ENCODE measurements at regions of chr11 and their contacts with region 1.

Region 1: DNA sequence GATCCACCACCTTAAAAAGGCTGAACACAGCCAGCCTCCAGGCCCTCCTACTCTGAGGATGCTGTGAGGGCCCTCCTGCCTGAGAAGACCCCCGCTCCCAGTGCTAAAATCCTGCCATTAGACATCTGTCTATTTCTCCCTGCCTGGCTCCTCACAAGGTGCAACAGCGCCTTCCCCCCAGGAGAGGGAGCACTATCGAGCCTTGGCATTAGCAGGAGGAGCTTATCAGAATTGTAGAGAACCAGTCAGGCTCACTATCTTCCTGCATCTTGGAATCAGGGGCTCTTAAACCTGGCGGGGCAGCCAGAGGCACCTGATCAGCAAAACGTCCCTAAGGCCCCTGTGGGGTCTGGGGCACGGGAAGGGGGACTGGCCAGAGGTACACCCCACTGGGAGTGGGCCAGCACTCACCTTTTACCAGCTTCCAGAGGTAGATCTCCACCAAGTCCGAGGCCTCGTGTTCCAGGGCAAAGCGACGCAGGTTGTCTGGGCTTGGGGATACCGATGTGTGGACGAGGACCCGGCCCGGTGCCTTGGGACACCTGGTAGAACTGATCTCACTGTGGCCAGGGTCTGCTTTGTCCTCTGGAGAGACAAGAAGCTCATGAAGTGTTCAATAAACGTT is 28.7 kb downstream of the CHRDL2 start:
- DNase-seq: peak; percentile 79 to 85 (median 84)
- ATAC-seq: peak; percentile 88
- H3K4me3 ChIP-seq: no peak overlapping the region
- H3K27ac ChIP-seq: no peak overlapping the region
- H3K4me1 ChIP-seq: peaks cover 6 to 12% of the 10 kb centered on the region in 2 experiments; a peak in 3 of 5 replicates
- H3K27me3 ChIP-seq: no peaks in the 10 kb centered on the region
- CTCF ChIP-seq: peak; percentile 91 to 95 (median 92)
- EP300 ChIP-seq: no peak
- POLR2A ChIP-seq: no peak
- RAD21 ChIP-seq: peak; percentile 57 to 77

Region 2: GRCh38 chr11:74620531-74620930 is 82.0 kb before region 1 on chr11:
- CTCF ChIA-PET with region 1: no interaction called
- POLR2A ChIA-PET with region 1: no interaction called
- in situ Hi-C with region 1: no loop called
- intact Hi-C with region 1: no loop called
- DNase-seq: no peak
- ATAC-seq: no peak
- H3K4me3 ChIP-seq: no peak overlapping the region
- H3K27ac ChIP-seq: no peak overlapping the region
- H3K4me1 ChIP-seq: no peaks in the 10 kb centered on the region; a peak in 1 of 5 replicates
- H3K27me3 ChIP-seq: no peaks in the 10 kb centered on the region
- CTCF ChIP-seq: no peak
- EP300 ChIP-seq: no peak
- POLR2A ChIP-seq: no peak
- RAD21 ChIP-seq: no peak

Region 3: GRCh38 chr11:74726547-74727182 is 24.2 kb after region 1 on chr11:
- CTCF ChIA-PET with region 1: interaction called, 8 read pairs
- POLR2A ChIA-PET with region 1: no interaction called
- in situ Hi-C with region 1: no loop called
- intact Hi-C with region 1: loop called (anchors 1 kb)
- DNase-seq: peak; percentile 79 to 83 (median 80)
- ATAC-seq: peak; percentile 99
- H3K4me3 ChIP-seq: no peak overlapping the region
- H3K27ac ChIP-seq: no peak overlapping the region
- H3K4me1 ChIP-seq: peaks cover 0 to 10% of the 10 kb centered on the region in 2 experiments; a peak in 1 of 5 replicates
- H3K27me3 ChIP-seq: peaks cover 52 to 59% of the 10 kb centered on the region in 2 experiments
- CTCF ChIP-seq: peak; percentile 90 to 94 (median 91)
- EP300 ChIP-seq: no peak
- POLR2A ChIP-seq: no peak
- RAD21 ChIP-seq: peak; percentile 77 to 90

Region 4: DNA sequence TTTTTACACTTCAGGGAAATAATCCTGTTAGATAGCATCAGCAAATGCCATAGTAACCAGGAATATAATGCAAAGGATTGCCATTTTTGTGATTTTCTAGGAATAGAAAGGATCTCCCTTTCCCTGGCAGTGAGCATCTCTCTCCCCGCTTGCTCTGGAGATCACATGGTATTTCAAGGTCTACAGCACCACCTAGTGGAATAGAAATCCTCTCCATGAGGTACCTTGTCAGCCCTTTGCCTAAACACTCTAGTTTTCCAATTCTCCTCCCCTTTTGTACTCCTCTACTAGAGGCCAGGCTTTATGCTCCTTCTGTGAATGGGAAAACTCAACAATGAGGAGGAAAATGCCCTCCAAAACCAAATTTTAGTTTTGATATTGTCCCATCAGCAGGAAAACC is 168.0 kb after region 1 on chr11:
- CTCF ChIA-PET with region 1: no interaction called
- POLR2A ChIA-PET with region 1: no interaction called
- in situ Hi-C with region 1: no loop called
- intact Hi-C with region 1: loop called (anchors 2 kb)
- DNase-seq: peak; percentile 31 to 59 (median 46)
- ATAC-seq: peak; percentile 82
- H3K4me3 ChIP-seq: no peak overlapping the region
- H3K27ac ChIP-seq: no peak overlapping the region
- H3K4me1 ChIP-seq: no peaks in the 10 kb centered on the region
- H3K27me3 ChIP-seq: no peaks in the 10 kb centered on the region
- CTCF ChIP-seq: peak; percentile 39 to 54 (median 47); a peak in 4 of 6 replicates
- EP300 ChIP-seq: no peak
- POLR2A ChIP-seq: no peak
- RAD21 ChIP-seq: peak in 1 of 2 experiments; percentile 54; a peak in 2 of 4 replicates

Region 5: GRCh38 chr11:74966651-74967050 is 264.2 kb after region 1 on chr11:
- CTCF ChIA-PET with region 1: no interaction called
- POLR2A ChIA-PET with region 1: no interaction called
- in situ Hi-C with region 1: no loop called
- intact Hi-C with region 1: no loop called
- DNase-seq: no peak
- ATAC-seq: no peak
- H3K4me3 ChIP-seq: no peak overlapping the region
- H3K27ac ChIP-seq: no peak overlapping the region
- H3K4me1 ChIP-seq: peaks cover 3 to 21% of the 10 kb centered on the region in 2 experiments; a peak in 3 of 5 replicates
- H3K27me3 ChIP-seq: no peaks in the 10 kb centered on the region
- CTCF ChIP-seq: no peak
- EP300 ChIP-seq: no peak
- POLR2A ChIP-seq: no peak
- RAD21 ChIP-seq: no peak

Region 6: DNA sequence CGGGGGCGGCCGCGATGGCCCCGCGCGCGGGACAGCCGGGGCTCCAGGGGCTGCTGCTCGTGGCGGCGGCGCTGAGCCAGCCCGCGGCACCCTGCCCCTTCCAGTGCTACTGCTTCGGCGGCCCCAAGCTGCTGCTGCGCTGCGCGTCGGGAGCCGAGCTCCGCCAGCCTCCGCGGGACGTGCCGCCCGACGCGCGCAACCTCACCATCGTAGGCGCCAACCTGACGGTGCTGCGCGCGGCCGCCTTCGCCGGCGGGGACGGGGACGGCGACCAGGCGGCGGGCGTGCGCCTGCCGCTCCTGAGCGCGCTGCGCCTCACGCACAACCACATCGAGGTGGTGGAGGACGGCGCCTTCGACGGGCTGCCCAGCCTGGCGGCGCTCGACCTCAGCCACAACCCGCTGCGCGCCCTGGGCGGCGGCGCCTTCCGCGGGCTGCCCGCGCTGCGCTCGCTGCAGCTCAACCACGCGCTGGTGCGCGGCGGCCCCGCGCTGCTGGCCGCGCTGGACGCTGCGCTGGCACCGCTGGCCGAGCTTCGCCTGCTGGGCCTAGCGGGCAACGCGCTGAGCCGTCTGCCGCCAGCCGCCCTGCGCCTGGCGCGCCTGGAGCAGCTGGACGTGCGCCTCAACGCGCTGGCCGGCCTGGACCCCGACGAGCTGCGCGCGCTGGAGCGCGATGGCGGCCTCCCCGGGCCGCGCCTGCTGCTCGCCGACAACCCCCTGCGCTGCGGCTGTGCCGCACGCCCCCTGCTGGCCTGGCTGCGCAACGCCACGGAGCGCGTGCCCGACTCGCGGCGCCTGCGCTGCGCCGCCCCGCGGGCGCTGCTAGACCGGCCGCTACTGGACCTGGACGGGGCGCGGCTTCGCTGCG is 538.8 kb after region 1 on chr11:
- CTCF ChIA-PET with region 1: interaction called, 4 read pairs
- POLR2A ChIA-PET with region 1: no interaction called
- in situ Hi-C with region 1: no loop called
- intact Hi-C with region 1: loop called (anchors 10 kb)
- DNase-seq: peak; percentile 93 to 96 (median 95)
- ATAC-seq: peak; percentile 96
- H3K4me3 ChIP-seq: peak overlapping the region; percentile 51
- H3K27ac ChIP-seq: no peak overlapping the region
- H3K4me1 ChIP-seq: peaks cover 3 to 23% of the 10 kb centered on the region in 2 experiments; a peak in 4 of 5 replicates
- H3K27me3 ChIP-seq: peaks cover 24 to 56% of the 10 kb centered on the region in 2 experiments
- CTCF ChIP-seq: peak in 2 of 3 experiments; percentile 99; a peak in 5 of 6 replicates
- EP300 ChIP-seq: peak; percentile 12; the same call in 1 of the 2 replicates
- POLR2A ChIP-seq: no peak
- RAD21 ChIP-seq: peak; percentile 76 to 91